Mucosa of descending colon (tissue), 3 donors: ENCODE measurements at regions of chr21 and their contacts with region 1.

Region 1: DNA sequence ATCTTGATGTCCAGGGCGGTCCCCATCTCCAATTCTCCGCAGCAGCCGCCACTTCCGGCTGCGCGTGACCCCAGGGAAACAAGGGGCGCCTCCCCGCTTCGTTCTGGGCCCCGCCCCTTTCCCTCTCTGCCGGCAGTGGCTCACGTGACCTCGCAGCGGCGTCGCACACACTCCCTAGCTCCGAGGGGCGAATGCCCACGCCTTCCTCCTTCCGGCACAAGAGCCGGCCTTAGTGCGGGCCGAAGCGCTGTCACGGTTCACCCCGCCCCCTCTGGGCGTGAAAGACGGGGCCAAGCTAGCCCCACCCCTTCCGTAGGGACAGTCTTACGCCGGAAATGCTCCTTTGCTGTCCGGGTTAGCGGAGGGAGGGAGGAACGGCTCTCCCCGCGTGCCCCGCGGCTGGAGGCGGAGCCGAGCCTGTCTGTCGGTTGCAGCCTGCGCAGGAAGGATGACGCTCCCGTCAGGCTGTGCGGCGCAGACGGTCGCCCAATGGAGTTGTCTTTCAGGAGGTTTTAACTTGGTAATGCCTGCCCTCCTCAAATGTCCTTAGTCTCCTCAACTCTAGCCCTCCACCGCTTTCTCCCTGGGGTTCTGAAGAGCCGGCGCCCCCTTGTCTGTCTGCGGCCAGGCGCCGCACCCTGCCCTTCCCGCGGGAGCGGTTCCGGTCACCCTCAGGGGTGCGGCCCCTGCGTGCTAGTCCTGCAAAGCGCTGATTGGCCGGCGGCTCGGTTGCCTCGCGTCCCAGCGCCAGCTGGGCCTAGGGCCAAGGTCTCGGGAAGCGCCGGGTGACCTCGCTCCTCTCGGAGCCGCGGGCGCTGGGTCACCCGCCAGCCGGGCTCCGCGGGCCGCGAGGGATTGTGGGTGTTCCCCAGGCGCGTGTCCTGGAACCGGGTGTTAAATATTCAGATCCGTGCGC is at the start of gene VPS26C:
- DNase-seq: peak; percentile 99 to 100 (median 99)
- ATAC-seq: peak; percentile 92
- H3K4me3 ChIP-seq: peak within 1 kb of the TSS; percentile 75
- H3K4me1 ChIP-seq: peaks cover 10% of the 10 kb centered on the region
- CTCF ChIP-seq: peak; percentile 10
- total RNA-seq, gene VPS26C: 62.7 to 72.4 (median 71.8) TPM

Region 2: GRCh38 chr21:37366482-37367316 is 99.2 kb after region 1 on chr21 and contains the start of gene DYRK1A:
- intact Hi-C with region 1: loop called (anchors 5 to 10 kb)
- DNase-seq: peak; percentile 98
- ATAC-seq: peak; percentile 92
- H3K4me3 ChIP-seq: peak within 1 kb of the TSS; percentile 98
- H3K4me1 ChIP-seq: peaks cover 30% of the 10 kb centered on the region
- CTCF ChIP-seq: no peak
- total RNA-seq, gene DYRK1A: 61.2 to 76.5 (median 72.7) TPM

Region 3: DNA sequence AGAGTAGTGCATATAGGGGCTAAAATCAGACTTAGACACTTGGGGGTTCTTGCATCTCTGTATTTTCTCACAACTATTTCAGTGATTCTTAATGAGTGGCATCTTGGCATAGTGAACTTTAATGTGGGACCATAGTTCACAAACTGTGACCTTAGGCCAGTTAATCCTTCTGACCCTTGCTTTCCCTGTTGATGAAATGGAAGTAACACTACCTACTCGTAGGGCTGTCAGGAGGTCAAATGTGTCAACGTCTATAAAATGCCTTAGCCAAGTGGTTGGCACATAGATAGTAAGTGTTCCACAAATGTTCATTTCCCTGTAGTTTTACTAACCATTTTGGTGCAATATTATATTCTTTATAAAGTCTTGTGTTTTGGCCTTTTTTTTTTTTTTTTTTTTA is 148.4 kb after region 1 on chr21:
- intact Hi-C with region 1: no loop called
- DNase-seq: no peak
- ATAC-seq: peak; percentile 85
- H3K4me3 ChIP-seq: no peak overlapping the region
- H3K4me1 ChIP-seq: peaks cover 12% of the 10 kb centered on the region
- CTCF ChIP-seq: no peak